H1 (cell line): ENCODE measurements at regions of chr4 and their contacts with region 1.

Region 1: GRCh38 chr4:110344162-110344561 is 131.8 kb upstream of the ENPEP start:
- DNase-seq: no peak
- H3K4me3 ChIP-seq: no peak overlapping the region
- H3K27ac ChIP-seq: no peak overlapping the region
- H3K4me1 ChIP-seq: peaks cover 0 to 2% (median under 1%) of the 10 kb centered on the region in 4 experiments; a peak in 1 of 7 replicates
- H3K27me3 ChIP-seq: no peaks in the 10 kb centered on the region
- CTCF ChIP-seq: peak in 2 of 3 experiments; percentile 26 to 62; a peak in 2 of 4 replicates
- EP300 ChIP-seq: no peak
- POLR2A ChIP-seq: no peak
- RAD21 ChIP-seq: peak; percentile 80 to 83

Region 2: GRCh38 chr4:109998867-109999584 is 345.1 kb before region 1 on chr4:
- CTCF ChIA-PET with region 1: interaction called, 43 read pairs
- POLR2A ChIA-PET with region 1: no interaction called
- DNase-seq: no peak
- H3K4me3 ChIP-seq: no peak overlapping the region
- H3K27ac ChIP-seq: no peak overlapping the region
- H3K4me1 ChIP-seq: no peaks in the 10 kb centered on the region
- H3K27me3 ChIP-seq: no peaks in the 10 kb centered on the region
- CTCF ChIP-seq: peak in 2 of 3 experiments; percentile 62 to 76; a peak in 3 of 4 replicates
- EP300 ChIP-seq: no peak
- POLR2A ChIP-seq: no peak
- RAD21 ChIP-seq: peak; percentile 81 to 86

Region 3: GRCh38 chr4:110172972-110173371 is 171.2 kb before region 1 on chr4:
- CTCF ChIA-PET with region 1: no interaction called
- POLR2A ChIA-PET with region 1: no interaction called
- DNase-seq: no peak
- H3K4me3 ChIP-seq: no peak overlapping the region
- H3K27ac ChIP-seq: no peak overlapping the region
- H3K4me1 ChIP-seq: no peaks in the 10 kb centered on the region
- H3K27me3 ChIP-seq: no peaks in the 10 kb centered on the region
- CTCF ChIP-seq: no peak
- EP300 ChIP-seq: no peak
- POLR2A ChIP-seq: no peak
- RAD21 ChIP-seq: no peak

Region 4: DNA sequence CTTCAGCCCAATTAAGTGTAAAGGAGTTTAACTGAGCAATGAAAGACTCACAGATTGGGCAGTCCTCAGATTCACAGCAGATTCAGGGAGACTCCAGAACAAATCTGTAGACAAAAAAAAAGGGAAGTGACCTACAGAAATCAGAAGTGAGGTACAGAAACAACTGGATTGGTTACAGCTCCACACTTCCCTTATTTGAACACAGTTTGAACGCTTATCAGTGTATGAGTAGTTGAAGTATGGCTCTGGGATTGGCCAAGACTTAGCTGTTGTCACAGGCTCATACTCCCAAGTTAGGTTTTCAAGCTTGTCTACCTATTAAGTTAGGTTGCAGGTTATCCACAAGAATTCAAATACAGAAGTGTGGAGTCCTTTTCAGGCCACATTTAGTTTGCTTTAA is 33.4 kb before region 1 on chr4:
- CTCF ChIA-PET with region 1: interaction called, 26 read pairs
- POLR2A ChIA-PET with region 1: no interaction called
- DNase-seq: no peak
- H3K4me3 ChIP-seq: no peak overlapping the region
- H3K27ac ChIP-seq: no peak overlapping the region
- H3K4me1 ChIP-seq: no peaks in the 10 kb centered on the region
- H3K27me3 ChIP-seq: no peaks in the 10 kb centered on the region
- CTCF ChIP-seq: no peak
- EP300 ChIP-seq: no peak
- POLR2A ChIP-seq: no peak
- RAD21 ChIP-seq: no peak

Region 5: DNA sequence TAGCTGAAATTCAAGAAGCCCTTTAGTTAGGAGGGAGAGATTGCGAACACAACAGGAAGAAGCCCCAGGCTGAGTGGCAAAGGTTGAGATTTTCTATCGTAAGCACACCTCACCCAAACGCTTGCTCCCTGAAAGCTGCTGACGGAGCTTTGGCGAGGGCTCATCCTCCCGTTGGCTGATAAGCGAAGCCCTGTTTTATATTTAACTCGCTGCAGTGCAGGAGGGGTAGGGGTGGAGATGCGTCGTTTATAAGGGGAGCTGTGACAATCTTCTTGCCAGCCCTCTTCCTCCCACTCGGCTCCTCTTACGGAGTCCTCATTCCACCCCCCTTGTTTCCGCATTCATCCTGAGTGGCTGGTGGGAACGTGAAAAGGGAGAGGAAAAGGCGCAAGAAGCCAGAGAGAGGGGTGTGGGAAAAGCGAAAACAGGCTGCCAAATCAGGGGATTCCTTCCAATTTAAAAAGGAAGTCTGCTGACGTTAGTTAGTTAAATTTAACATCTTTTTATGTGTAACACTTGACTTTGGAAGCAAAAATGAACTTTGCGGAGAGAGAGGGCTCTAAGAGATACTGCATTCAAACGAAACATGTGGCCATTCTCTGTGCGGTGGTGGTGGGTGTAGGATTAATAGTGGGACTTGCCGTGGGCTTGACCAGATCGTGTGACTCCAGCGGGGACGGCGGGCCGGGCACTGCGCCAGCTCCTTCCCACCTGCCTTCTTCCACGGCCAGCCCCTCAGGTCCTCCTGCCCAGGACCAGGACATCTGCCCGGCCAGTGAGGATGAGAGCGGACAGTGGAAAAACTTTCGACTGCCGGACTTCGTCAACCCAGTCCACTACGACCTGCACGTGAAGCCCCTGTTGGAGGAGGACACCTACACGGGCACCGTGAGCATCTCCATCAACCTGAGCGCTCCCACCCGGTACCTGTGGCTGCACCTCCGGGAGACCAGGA is 132.0 kb after region 1 on chr4 and contains the start of gene ENPEP:
- CTCF ChIA-PET with region 1: interaction called, 10 read pairs
- POLR2A ChIA-PET with region 1: no interaction called
- DNase-seq: no peak
- H3K4me3 ChIP-seq: no peak within 1 kb of the TSS
- H3K27ac ChIP-seq: no peak within 1 kb of the TSS
- H3K4me1 ChIP-seq: peaks cover 0 to 6% (median 5%) of the 10 kb centered on the region in 4 experiments; a peak in 6 of 7 replicates
- H3K27me3 ChIP-seq: peaks cover 0 to 1% (median 0%) of the 10 kb centered on the region in 4 experiments; a peak in 1 of 7 replicates
- CTCF ChIP-seq: no peak
- EP300 ChIP-seq: no peak
- POLR2A ChIP-seq: no peak
- RAD21 ChIP-seq: no peak
- total RNA-seq, gene ENPEP: 0.61 and 0.63 TPM in 2 replicates

Region 6: GRCh38 chr4:110516106-110516922 is 172.2 kb after region 1 on chr4:
- CTCF ChIA-PET with region 1: interaction called, 497 read pairs
- POLR2A ChIA-PET with region 1: no interaction called
- DNase-seq: peak; percentile 50 to 80
- H3K4me3 ChIP-seq: no peak overlapping the region
- H3K27ac ChIP-seq: no peak overlapping the region
- H3K4me1 ChIP-seq: no peaks in the 10 kb centered on the region
- H3K27me3 ChIP-seq: no peaks in the 10 kb centered on the region
- CTCF ChIP-seq: peak; percentile 49 to 84 (median 76)
- EP300 ChIP-seq: no peak
- POLR2A ChIP-seq: no peak
- RAD21 ChIP-seq: peak; percentile 70 to 72